Right cardiac atrium (tissue), 5 donors: ENCODE measurements at regions of chr1 and their contacts with region 1.

Region 1: DNA sequence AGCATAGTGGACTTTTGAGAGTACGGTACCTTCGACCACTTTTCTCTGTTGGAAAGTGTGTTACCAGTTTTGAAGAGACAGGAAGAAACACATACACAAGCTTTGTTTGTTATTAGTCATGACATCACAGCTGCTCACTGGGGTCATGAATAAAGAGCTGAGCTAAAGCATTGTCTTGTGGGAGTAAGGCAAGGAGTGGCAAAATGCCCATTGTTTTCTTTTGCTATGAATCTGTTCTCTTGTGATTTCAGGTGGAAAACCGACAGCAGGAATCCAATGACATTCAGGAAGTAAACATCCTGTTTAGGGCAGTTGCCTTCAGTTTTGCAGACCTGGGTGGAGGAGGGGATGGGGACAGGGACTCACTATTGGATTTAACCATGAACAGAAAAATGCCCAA is 66.2 kb downstream of the RGL1 start:
- DNase-seq: no peak
- ATAC-seq: peak; percentile 28 to 45
- H3K4me3 ChIP-seq: no peak overlapping the region
- H3K27ac ChIP-seq: peak overlapping the region; percentile 64
- H3K4me1 ChIP-seq: peaks cover 17% of the 10 kb centered on the region
- H3K27me3 ChIP-seq: no peaks in the 10 kb centered on the region

Region 2: DNA sequence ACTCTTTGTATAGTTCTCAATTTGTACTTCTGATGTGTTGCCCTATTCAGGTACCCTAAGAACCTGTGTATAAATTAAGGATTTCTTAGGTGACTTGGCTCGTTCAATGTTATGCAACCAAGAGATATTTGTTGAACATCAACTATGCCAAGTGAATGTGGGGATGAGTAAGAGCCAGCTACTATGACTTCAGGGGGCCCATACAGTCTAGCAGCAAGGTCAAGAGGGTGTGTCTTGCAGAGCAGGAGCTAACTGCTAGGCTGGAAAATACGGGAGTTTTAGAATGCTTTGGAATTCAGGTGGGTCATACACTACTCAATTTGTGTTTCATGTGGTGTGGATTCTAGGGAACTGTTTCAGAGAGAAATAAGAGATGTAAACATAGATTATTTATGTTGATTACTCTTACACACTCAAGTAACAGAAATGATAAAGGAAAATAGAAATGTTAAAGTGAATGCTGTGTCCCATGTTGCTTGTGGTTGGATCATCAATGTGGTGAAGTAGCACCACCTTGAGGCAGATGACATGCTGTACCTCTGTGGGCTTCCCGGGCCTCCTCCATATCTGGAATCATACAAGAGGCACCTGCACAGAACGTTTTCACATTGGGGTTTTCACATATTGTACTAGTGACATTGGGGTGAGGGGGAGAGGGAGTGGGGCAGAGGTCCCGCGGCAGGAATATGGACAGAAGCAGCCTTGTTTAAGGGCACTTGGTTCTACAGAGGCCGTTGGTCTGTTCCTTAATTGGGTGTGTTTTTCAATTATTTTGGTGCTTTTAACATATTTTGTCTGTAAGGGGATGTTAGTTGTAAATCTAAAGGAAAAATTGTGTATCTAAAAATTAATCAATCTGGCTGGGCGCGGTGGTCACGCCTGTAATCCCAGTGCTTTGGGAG is 248.0 kb before region 1 on chr1:
- intact Hi-C with region 1: no loop called
- DNase-seq: peak in 2 of 3 donors; percentile 50 to 67
- ATAC-seq: peak; percentile 87
- H3K4me3 ChIP-seq: no peak overlapping the region
- H3K27ac ChIP-seq: no peak overlapping the region
- H3K4me1 ChIP-seq: peaks cover 2% of the 10 kb centered on the region
- H3K27me3 ChIP-seq: no peaks in the 10 kb centered on the region

Region 3: GRCh38 chr1:183804881-183805841 is 66.0 kb before region 1 on chr1 and contains the start of gene RGL1:
- intact Hi-C with region 1: loop called in 3 of 4 experiments (anchors 10 kb)
- DNase-seq: peak; percentile 80 to 91 (median 86)
- ATAC-seq: peak; percentile 95 to 98
- H3K4me3 ChIP-seq: peak within 1 kb of the TSS; percentile 83
- H3K27ac ChIP-seq: peak within 1 kb of the TSS; percentile 82
- H3K4me1 ChIP-seq: peaks cover 5% of the 10 kb centered on the region
- H3K27me3 ChIP-seq: no peaks in the 10 kb centered on the region
- total RNA-seq, gene RGL1: 16.3 to 22.9 (median 17.2) TPM

Region 4: DNA sequence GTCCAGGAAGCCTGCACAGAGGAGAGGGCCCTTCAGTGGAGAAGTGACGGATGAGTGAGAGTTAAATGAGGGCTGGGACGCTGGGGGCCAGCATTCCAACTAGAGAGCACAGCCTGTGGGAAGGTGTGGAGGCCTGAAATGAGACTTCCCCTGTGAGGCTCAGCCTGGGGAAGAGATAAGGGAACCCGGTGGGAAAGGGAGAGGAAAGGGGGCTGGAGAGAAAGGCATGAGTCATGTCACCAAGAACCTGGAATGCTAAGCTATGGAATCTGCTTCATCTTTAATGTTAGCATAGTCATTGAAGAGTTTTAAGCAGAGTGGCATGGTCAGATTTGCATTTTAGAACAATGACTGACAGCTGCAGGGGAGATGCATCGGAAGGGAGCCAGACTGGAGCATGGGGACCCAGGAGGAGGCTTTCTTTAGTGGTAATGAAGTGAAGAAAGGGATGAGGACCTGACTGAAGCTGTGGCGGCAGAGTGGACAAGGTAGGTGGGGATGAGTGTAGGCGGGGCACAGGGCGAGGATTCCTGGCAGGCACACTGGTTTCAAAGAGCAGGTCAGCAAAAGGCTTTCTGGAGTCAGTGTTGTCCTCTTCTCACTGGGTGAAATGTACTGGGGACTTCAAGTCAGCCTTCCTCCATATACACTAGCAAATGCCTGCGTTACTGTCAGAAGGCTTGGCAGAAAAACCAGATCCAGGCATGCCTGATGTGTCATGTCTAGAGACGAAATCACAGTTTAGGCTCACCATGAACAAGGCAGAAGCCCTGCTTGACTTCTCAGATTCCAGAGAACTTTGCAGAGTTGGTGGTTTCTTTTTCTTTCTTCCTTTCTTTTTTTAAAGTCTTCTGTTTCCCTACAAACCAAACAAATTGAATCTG is 58.2 kb before region 1 on chr1:
- intact Hi-C with region 1: loop called in 3 of 4 experiments (anchors 10 kb)
- DNase-seq: no peak
- ATAC-seq: peak; percentile 20 to 67
- H3K4me3 ChIP-seq: no peak overlapping the region
- H3K27ac ChIP-seq: peak overlapping the region; percentile 50
- H3K4me1 ChIP-seq: peaks cover 19% of the 10 kb centered on the region
- H3K27me3 ChIP-seq: no peaks in the 10 kb centered on the region

Region 5: DNA sequence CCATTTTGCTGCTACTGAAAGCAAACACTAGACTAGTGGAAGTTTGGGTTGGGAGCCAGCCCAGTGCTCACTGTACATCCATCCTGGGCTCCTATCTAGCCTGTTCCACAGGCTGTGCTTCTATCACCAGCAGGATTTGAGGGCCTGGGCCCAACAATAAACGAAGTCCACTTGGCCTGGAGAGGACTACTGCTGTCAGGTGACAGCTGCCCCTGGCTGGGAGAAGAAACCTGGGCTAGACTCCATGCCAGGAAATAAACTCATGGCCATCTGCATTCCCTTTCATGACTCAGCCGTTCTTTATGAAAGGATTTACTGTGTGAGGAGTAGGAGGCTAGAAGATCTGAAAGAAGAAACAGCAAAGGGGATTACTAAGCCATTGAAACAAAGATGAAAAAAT is 130.9 kb after region 1 on chr1:
- intact Hi-C with region 1: no loop called
- DNase-seq: peak in 2 of 3 donors; percentile 25 to 44
- ATAC-seq: peak; percentile 64 to 69
- H3K4me3 ChIP-seq: no peak overlapping the region
- H3K27ac ChIP-seq: peak overlapping the region; percentile 37
- H3K4me1 ChIP-seq: peaks cover 8% of the 10 kb centered on the region
- H3K27me3 ChIP-seq: no peaks in the 10 kb centered on the region